BJ (cell line): ENCODE measurements at regions of chr4 and their contacts with region 1.

Region 1: DNA sequence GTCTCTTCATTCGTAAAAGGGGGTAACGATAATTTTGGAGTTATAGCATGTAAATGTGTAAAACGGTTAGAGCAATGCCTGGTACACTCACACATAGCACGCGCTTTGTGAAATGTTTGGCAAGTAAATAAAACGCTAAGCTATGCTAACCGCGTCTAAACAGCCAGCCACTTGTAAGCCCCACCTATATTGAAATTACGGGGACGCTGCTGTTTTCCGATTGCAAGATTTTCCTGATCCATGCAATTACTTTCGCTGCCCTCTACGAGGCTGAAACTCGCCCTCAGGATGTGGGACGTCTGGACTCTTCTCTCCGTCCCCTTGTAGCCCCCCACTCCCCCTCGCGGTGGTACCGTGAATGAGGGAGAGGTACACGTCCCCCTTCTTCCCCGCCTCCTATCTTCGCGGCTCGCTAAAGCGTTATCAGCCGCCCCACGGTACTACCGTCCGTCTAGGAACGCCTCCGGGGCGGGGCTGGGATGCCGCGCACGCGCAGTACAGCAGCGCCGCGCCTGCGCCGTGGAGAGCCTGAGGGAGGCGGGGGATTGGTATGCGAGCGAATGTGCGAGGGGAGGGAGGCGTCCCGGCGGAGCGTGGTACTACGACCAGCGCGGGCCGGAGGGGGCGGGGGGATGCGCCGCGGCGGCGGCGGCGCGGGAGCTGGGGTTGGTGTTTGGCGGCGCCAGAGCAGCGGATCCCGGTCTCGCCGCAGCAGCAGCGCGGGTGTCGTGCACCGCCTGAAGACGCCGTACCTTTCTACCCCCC is at the start of gene STIM2:
- DNase-seq: peak; percentile 74
- H3K4me3 ChIP-seq: peak within 1 kb of the TSS; percentile 80
- H3K27me3 ChIP-seq: no peaks in the 10 kb centered on the region
- CTCF ChIP-seq: peak; percentile 52
- polyA plus RNA-seq, gene STIM2: 14.4 and 17.8 TPM in 2 replicates

Region 2: DNA sequence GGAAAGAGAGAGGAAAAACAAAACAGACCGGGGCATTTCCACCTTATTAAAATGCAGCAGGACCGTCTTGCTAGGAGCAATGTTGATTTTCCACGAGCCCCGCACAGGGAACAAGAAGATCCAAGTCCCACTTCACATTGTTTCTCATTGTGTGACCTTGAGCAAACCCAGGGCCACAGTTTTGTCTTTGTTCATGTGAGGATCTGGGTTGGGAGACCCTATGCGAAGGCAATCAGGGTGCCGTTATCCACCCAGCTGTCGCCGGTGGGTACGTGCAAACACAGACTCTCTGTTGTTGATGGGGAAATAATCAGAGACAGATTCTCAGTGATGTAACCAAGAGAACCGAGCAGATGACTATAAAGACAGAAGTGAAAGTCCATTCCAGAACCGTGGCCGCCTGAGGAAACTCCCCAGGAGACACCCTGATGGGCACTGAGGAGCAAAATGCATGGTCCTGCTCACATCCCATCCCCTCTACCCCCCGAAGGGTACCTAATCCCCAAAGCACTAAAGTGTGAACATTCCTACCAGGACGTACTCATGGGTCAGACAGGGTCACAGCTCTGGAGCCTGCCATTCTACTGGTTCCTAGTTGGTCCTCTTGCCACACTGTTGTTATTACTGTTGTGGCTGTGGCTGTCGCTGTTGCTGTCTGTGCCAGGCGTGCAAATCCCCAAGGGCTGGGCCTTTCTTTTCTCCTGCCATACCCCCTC is 642.2 kb before region 1 on chr4:
- CTCF ChIA-PET with region 1: no interaction called
- POLR2A ChIA-PET with region 1: no interaction called
- DNase-seq: no peak
- H3K4me3 ChIP-seq: no peak overlapping the region
- H3K27me3 ChIP-seq: peaks cover 5% of the 10 kb centered on the region; the same call in 1 of the 2 replicates
- CTCF ChIP-seq: no peak

Region 3: DNA sequence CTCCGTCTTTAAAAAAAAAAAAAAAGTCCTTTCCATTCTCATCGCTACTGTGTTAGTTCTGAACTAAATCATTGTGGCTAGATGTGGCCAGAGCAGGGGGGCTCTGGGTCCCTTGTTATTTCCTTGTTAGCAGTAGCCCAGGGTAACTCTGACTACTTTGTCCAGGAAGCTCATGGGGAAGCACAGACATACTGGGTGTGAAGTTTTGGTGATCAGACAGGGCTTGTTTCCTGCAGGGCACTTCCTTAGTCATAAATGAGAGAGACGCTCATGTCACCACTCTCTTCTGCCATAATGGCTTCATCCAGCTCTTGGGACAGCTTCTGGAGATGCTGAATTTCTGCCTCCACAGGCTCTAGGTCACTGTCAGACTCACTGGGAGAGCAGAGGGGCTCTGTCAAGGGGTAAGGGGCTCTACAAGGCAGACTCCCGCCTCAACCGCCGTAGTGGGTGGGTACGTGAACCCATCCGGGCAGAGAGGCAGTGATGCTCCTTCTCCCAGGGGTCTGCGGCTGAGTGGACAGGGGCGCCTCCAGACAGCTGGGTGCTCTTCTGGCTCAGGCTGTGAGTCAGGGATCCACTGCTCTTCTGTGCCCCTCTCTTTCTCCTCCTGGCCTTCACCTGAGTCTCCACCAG is 13.2 kb after region 1 on chr4:
- CTCF ChIA-PET with region 1: no interaction called
- POLR2A ChIA-PET with region 1: no interaction called
- DNase-seq: no peak
- H3K4me3 ChIP-seq: no peak overlapping the region
- H3K27me3 ChIP-seq: no peaks in the 10 kb centered on the region
- CTCF ChIP-seq: no peak

Region 4: GRCh38 chr4:27040356-27040755 is 180.0 kb after region 1 on chr4:
- CTCF ChIA-PET with region 1: no interaction called
- POLR2A ChIA-PET with region 1: interaction called, 27 read pairs
- DNase-seq: no peak
- H3K4me3 ChIP-seq: no peak overlapping the region
- H3K27me3 ChIP-seq: peaks cover 5% of the 10 kb centered on the region
- CTCF ChIP-seq: no peak

Region 5: DNA sequence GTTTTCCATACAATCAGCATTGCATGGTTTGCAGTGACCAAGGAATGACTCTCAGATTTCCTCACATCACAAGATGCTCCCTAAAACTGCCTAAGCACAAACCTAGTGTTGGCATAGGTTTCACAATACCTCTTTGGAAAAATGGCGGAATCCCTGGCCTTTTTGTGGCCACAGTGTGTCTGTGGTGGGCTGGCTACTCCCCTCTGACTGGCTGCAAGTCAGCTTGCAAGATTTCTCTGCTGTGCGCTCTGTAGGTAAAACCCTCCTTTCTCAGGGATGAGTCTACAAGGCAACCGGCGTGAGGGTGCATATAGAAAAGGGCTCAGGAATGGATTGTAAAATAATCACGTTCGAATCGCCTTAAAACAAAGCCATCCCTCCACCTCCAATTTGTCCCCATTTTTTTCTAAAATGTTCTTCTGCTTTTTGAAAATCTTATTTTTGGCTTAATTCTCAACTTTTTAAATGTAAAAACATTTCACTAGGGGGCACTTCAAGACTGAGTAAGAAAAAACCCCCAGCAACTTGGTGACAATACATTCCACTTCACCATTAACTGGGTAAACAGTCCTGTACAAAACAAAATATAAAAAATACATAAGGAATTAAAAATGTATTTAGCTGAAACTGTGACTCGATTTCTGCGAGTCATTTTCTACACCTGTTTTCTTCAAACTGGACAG is 235.9 kb after region 1 on chr4:
- CTCF ChIA-PET with region 1: no interaction called
- POLR2A ChIA-PET with region 1: no interaction called
- DNase-seq: no peak
- H3K4me3 ChIP-seq: no peak overlapping the region
- H3K27me3 ChIP-seq: peaks cover 4% of the 10 kb centered on the region; the same call in 1 of the 2 replicates
- CTCF ChIP-seq: no peak